K562 (cell line): ENCODE measurements at regions of chr2 and their contacts with region 1.

Region 1: GRCh38 chr2:86396291-86396785 is 44.8 kb upstream of the KDM3A start:
- DNase-seq: peak; percentile 24 to 65 (median 34)
- ATAC-seq: peak; percentile 90
- H3K4me3 ChIP-seq: no peak overlapping the region
- H3K27ac ChIP-seq: no peak overlapping the region
- H3K4me1 ChIP-seq: peaks cover 0 to 9% of the 10 kb centered on the region in 2 experiments; a peak in 1 of 5 replicates
- H3K27me3 ChIP-seq: no peaks in the 10 kb centered on the region; a peak in 2 of 5 replicates
- CTCF ChIP-seq: peak; percentile 69 to 81 (median 76)
- EP300 ChIP-seq: no peak
- POLR2A ChIP-seq: no peak
- RAD21 ChIP-seq: peak; percentile 87 to 89

Region 2: GRCh38 chr2:86319700-86320580 is 76.4 kb before region 1 on chr2:
- CTCF ChIA-PET with region 1: no interaction called
- POLR2A ChIA-PET with region 1: no interaction called
- in situ Hi-C with region 1: no loop called
- intact Hi-C with region 1: no loop called
- DNase-seq: no peak
- ATAC-seq: no peak
- H3K4me3 ChIP-seq: no peak overlapping the region
- H3K27ac ChIP-seq: no peak overlapping the region
- H3K4me1 ChIP-seq: no peaks in the 10 kb centered on the region
- H3K27me3 ChIP-seq: peaks cover 20 to 30% of the 10 kb centered on the region in 2 experiments
- CTCF ChIP-seq: no peak
- EP300 ChIP-seq: no peak
- POLR2A ChIP-seq: no peak
- RAD21 ChIP-seq: no peak

Region 3: DNA sequence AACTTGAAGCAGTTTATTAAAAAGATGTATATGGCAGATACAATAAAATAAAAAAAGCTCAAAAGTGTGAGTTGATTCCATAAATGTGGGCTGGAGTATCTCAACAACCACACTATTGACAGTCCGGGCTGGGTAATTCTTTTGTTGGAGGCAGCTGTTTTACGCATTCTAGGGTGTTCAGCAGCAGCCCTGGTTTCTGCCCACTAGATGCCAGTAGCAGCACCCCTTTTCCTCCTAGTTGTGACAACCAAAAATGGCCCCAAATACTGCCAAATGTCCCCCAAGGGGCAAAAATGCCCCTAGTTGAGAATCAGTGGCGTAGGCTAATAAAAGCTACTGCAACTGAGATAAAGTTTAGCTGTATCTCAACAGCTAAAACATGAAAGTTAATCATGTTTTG is 122.1 kb after region 1 on chr2:
- CTCF ChIA-PET with region 1: no interaction called
- POLR2A ChIA-PET with region 1: no interaction called
- in situ Hi-C with region 1: no loop called
- intact Hi-C with region 1: no loop called
- DNase-seq: no peak
- ATAC-seq: no peak
- H3K4me3 ChIP-seq: no peak overlapping the region
- H3K27ac ChIP-seq: no peak overlapping the region
- H3K4me1 ChIP-seq: no peaks in the 10 kb centered on the region
- H3K27me3 ChIP-seq: no peaks in the 10 kb centered on the region
- CTCF ChIP-seq: peak in 2 of 3 experiments; percentile 21 to 25; a peak in 1 of 6 replicates
- EP300 ChIP-seq: no peak
- POLR2A ChIP-seq: no peak
- RAD21 ChIP-seq: peak in 1 of 2 experiments; percentile 42; a peak in 2 of 4 replicates

Region 4: DNA sequence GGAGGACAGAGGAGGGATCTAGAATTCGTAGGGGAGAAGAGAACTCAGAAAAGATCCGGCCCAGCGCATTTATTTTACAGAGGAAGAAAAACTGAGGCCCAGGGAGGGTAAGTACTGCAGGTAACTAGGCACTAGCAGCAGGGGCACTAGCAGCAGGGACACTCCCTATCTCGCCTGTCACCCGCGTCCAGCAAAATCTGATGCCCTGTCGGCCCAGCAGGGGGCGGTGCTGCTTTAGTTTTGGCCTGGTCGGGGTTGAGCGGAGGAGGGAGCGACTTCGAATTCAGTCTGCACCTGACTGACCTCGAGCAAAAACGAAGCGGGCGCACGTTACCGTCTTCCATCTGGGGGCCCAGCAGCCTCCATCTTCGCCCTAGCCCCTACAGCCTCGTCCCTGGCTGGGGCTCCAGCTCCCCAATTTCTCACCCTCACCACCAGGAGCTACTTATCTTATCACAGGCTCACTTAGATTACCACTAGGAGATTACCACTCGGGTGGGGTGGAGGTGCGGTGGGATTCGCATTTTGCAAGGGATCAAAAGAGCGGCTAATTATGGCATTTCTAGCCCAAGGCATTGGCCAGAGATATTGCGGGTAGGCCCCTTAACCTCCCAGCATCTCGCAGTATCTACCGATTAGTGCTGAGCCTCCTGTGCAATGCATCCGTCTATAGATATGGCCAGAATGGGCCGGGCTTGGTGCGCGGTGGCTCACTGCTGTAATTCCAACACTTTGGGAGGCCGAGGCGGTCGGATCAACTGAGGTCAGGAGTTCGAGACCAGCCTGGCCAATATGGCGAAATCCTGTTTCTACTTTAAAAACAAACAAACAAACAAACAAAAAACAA is 412.2 kb after region 1 on chr2:
- CTCF ChIA-PET with region 1: no interaction called
- POLR2A ChIA-PET with region 1: no interaction called
- in situ Hi-C with region 1: no loop called
- intact Hi-C with region 1: loop called (anchors 2 kb)
- DNase-seq: peak; percentile 88 to 92 (median 90)
- ATAC-seq: peak; percentile 99
- H3K4me3 ChIP-seq: no peak overlapping the region
- H3K27ac ChIP-seq: no peak overlapping the region
- H3K4me1 ChIP-seq: peaks cover 3 to 19% of the 10 kb centered on the region in 2 experiments; a peak in 3 of 5 replicates
- H3K27me3 ChIP-seq: peaks cover 4 to 31% of the 10 kb centered on the region in 2 experiments; a peak in 4 of 5 replicates
- CTCF ChIP-seq: peak; percentile 88 to 95 (median 89)
- EP300 ChIP-seq: no peak
- POLR2A ChIP-seq: no peak
- RAD21 ChIP-seq: peak; percentile 87 to 96